ENCODE measurements at regions of chr5 and their contacts with region 1.

Region 1: DNA sequence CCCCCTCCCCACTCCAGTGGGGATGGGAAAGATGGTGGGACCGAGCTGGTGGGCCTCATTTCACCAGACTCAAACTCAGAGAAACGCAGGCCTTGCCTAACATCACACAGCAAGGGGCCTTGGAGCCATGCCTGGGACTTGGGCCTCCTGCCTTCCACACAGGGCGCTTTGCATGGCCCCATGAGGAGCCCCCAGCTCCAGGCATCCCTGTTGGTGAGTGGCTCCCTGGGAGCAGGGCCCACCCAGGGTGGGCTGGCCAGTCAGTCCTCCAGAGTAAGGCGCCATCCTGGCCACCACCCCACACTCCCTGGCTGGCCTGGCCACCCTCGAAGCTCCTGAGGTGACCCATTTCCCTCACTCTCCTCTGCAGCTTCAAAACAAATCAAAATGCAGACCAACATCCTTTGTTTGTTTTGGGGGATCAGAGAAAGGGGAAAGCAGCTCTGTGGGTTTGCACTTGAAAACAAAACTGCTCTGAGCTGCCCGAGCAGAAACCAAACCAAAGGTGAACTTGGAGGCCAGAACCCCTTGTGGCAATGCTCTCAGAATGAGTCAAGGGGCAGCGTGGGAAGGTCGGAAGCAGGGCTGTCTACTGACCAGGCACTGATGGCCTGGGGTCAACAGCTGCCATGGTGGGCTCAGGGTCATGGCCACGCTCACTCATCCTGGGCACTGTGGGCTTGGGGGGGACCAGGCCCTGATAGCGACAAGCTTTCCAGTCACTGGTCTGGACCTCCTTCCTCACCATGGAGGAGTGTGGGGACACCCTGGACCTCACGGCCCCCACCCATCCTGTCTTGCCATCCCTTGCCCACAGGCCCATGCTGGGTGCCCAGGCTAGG is 37.0 kb upstream of the VDAC1 start:
- DNase-seq: peak in 1 of 5 donors; percentile 13
- H3K4me3 ChIP-seq: no peak overlapping the region
- H3K4me3 Mint-ChIP-seq: peak overlapping the region in 4 of 7 donors; percentile 41 to 64 (median 49)
- H3K27ac ChIP-seq: no peak overlapping the region
- H3K27ac Mint-ChIP-seq: peak overlapping the region in 7 of 8 donors; percentile 17 to 89 (median 72)
- H3K4me1 ChIP-seq: peaks cover 36% of the 10 kb centered on the region
- H3K4me1 Mint-ChIP-seq: peaks cover 19 to 56% (median 37%) of the 10 kb centered on the region in 3 donors
- H3K27me3 ChIP-seq: no peaks in the 10 kb centered on the region
- H3K27me3 Mint-ChIP-seq: no peaks in the 10 kb centered on the region

Region 2: DNA sequence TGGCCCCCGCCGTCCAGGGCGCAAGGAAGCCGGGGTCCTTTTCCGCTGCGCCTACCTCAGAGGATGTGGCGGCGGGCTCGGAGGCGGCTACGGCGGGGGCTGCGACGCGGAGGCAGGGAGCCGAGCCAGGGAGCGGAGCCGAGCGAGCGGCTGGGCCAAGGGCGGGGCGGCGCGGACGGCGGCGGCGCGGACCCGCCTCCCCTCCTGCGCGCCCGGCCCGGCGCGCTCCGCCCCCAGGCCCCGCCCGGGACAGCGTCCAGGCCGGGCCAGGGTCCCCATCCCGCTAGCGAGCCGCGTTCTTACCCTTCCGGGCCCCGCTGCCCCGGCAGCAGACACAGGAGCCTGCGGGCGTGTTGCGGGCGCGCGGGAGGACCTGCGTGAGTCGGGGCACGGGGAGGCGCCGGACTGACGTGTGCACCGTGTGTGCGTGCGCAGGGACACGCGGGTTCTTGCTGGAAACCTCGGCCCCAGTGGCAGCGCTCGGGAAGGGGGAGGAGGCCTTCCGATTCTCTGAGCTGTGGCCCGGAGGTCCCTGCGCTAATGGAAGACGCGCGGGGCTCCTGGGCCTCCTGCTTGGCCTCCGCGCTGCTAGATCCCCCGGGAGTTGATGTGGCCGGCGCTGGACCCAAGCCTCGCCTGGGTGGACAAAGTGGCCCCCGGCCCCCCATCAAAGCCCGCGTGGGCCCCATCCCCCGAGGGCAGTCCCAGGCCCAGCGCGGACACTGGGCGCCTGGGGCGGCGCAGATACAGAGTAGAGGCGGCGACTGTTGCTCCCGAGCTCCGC is 37.0 kb before region 1 on chr5 and contains the start of gene VDAC1:
- CTCF ChIA-PET with region 1: interaction called, 12 read pairs
- POLR2A ChIA-PET with region 1: interaction called, 3 read pairs
- DNase-seq: peak; percentile 81 to 93 (median 90)
- H3K4me3 ChIP-seq: peak within 1 kb of the TSS; percentile 66
- H3K4me3 Mint-ChIP-seq: peak within 1 kb of the TSS; percentile 89 to 98 (median 94)
- H3K27ac ChIP-seq: peak within 1 kb of the TSS; percentile 94
- H3K27ac Mint-ChIP-seq: peak within 1 kb of the TSS; percentile 94 to 99 (median 98)
- H3K4me1 ChIP-seq: peaks cover 39% of the 10 kb centered on the region
- H3K4me1 Mint-ChIP-seq: peaks cover 35 to 51% (median 48%) of the 10 kb centered on the region in 3 donors
- H3K27me3 ChIP-seq: no peaks in the 10 kb centered on the region
- H3K27me3 Mint-ChIP-seq: no peaks in the 10 kb centered on the region
- total RNA-seq, gene VDAC1: 409 to 422 TPM

Region 3: DNA sequence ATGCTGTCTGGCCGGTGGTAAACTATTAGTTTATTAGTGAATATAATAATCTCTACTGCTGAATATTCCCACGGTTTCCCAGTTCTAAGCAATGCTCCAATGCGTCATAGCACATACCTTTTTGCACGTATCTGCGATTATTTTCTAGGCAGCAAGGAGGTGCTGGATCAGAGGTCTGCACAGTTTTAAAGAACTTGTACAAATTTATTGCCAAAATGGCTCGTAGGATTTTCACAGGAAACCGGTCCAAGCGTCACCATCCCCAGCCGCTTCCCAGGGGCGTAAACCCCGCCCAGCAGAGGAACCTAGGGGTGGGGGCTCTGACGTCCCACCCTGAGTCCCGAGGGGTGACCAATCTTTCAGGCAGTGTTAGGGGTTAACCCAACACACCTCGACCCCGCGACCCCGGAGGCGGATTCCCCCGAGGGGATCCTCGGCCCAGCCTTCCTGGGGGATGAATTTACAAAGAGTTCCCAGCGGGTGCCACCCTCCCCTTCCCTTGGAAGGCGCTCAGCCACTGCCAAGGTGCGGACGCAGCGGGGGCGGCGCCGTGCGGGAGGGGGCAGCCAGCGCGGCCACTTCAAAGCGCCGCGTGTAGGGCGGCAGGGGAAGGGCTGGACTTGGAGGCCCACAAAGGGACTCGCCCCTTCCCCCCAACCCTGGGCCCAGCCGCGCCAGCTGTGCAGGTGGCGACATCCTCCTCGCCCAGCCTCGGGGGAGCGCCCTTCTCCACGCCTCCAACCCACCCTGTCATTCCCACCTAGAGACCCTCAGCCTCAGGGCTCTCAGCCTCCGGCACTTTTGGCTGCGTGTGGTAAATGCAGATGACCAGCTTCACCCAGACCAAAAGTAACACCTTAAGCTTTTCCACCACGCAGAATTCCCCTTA is 29.2 kb after region 1 on chr5:
- CTCF ChIA-PET with region 1: interaction called, 45 read pairs
- POLR2A ChIA-PET with region 1: interaction called, 5 read pairs
- DNase-seq: peak in 3 of 5 donors; percentile 8 to 57 (median 19)
- H3K4me3 ChIP-seq: peak overlapping the region; percentile 55
- H3K4me3 Mint-ChIP-seq: peak overlapping the region; percentile 68 to 87 (median 82)
- H3K27ac ChIP-seq: no peak overlapping the region
- H3K27ac Mint-ChIP-seq: peak overlapping the region in 5 of 8 donors; percentile 6 to 86 (median 71)
- H3K4me1 ChIP-seq: peaks cover 58% of the 10 kb centered on the region
- H3K4me1 Mint-ChIP-seq: peaks cover 34 to 66% (median 55%) of the 10 kb centered on the region in 3 donors
- H3K27me3 ChIP-seq: no peaks in the 10 kb centered on the region
- H3K27me3 Mint-ChIP-seq: peaks cover 0 to 9% of the 10 kb centered on the region in 2 donors

Region 4: DNA sequence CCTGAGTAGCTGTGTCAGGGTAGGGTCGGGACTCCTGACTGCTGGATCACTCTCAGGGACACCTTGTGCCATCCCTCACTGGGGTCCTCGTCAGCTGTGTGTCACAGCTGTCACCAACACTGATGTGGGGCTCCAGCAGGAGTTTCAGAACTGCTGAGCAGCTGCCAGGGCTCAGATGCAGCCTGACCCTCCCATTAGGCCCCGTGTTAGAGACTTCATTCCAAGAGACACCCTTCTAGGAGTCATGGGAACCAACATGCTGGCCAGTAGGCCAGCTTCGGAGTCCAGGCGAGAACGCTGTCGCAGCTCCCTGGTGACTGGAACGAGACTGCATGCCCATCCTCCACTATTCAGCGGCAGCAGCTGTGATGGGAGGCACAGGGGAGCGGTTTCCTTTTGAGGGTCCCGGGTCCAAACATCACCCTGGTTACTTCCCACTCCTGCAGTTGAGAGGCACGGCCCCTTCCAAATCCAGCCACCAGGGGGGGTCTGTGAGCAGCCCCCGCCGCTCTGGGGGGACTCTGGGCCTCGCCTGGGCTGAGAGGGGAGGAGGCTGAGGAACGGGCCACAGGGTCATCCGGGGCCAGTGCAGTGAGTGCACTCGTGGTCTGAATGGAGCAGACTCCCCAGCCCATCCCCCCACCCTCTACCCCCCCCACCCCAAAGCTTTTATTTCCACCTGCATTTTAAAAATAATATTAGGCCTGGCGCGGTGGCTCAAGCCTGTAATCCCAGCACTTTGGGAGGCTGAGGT is 60.1 kb after region 1 on chr5:
- CTCF ChIA-PET with region 1: no interaction called
- POLR2A ChIA-PET with region 1: interaction called, 12 read pairs
- DNase-seq: peak; percentile 64 to 86 (median 74)
- H3K4me3 ChIP-seq: peak overlapping the region; percentile 34
- H3K4me3 Mint-ChIP-seq: peak overlapping the region in 4 of 7 donors; percentile 12 to 61 (median 25)
- H3K27ac ChIP-seq: no peak overlapping the region
- H3K27ac Mint-ChIP-seq: peak overlapping the region; percentile 15 to 95 (median 71)
- H3K4me1 ChIP-seq: peaks cover 91% of the 10 kb centered on the region
- H3K4me1 Mint-ChIP-seq: peaks cover 76 to 92% (median 91%) of the 10 kb centered on the region in 3 donors
- H3K27me3 ChIP-seq: no peaks in the 10 kb centered on the region
- H3K27me3 Mint-ChIP-seq: no peaks in the 10 kb centered on the region

Region 5: GRCh38 chr5:134132372-134133034 is 90.7 kb after region 1 on chr5:
- CTCF ChIA-PET with region 1: interaction called, 429 read pairs
- POLR2A ChIA-PET with region 1: interaction called, 7 read pairs
- DNase-seq: peak; percentile 78 to 95 (median 93)
- H3K4me3 ChIP-seq: peak overlapping the region; percentile 72
- H3K4me3 Mint-ChIP-seq: peak overlapping the region; percentile 72 to 99 (median 94)
- H3K27ac ChIP-seq: peak overlapping the region; percentile 78
- H3K27ac Mint-ChIP-seq: peak overlapping the region; percentile 92 to 100 (median 98)
- H3K4me1 ChIP-seq: peaks cover 100% of the 10 kb centered on the region
- H3K4me1 Mint-ChIP-seq: peaks cover 92 to 99% (median 99%) of the 10 kb centered on the region in 3 donors
- H3K27me3 ChIP-seq: no peaks in the 10 kb centered on the region
- H3K27me3 Mint-ChIP-seq: no peaks in the 10 kb centered on the region

Region 6: DNA sequence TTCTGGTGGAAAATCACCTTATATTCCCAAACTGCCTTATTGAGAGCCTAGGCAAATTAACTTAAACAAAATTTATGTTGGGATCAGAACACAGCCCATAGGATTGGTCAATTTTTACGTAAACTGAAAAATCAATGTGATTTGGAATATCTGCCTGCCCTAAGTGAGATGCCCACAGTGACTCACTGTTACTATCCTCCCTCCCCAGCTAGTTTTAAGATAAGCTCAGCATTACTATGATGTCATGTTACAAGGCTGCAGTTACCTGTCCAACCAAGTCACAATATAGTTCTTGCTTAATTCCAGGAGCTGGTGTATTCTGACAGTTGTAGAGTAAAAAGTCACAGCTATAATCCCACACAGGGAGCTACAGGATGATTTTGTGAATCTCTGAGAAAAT is 111.9 kb after region 1 on chr5:
- CTCF ChIA-PET with region 1: interaction called, 429 read pairs
- POLR2A ChIA-PET with region 1: interaction called, 10 read pairs
- DNase-seq: no peak
- H3K4me3 ChIP-seq: no peak overlapping the region
- H3K4me3 Mint-ChIP-seq: no peak overlapping the region
- H3K27ac ChIP-seq: no peak overlapping the region
- H3K27ac Mint-ChIP-seq: peak overlapping the region in 5 of 8 donors; percentile 25 to 91 (median 51)
- H3K4me1 ChIP-seq: peaks cover 52% of the 10 kb centered on the region
- H3K4me1 Mint-ChIP-seq: peaks cover 56 to 85% (median 80%) of the 10 kb centered on the region in 3 donors
- H3K27me3 ChIP-seq: no peaks in the 10 kb centered on the region
- H3K27me3 Mint-ChIP-seq: no peaks in the 10 kb centered on the region

Region 7: GRCh38 chr5:134245101-134245604 is 203.4 kb after region 1 on chr5:
- CTCF ChIA-PET with region 1: no interaction called
- POLR2A ChIA-PET with region 1: no interaction called
- DNase-seq: no peak
- H3K4me3 ChIP-seq: no peak overlapping the region
- H3K4me3 Mint-ChIP-seq: no peak overlapping the region
- H3K27ac ChIP-seq: no peak overlapping the region
- H3K27ac Mint-ChIP-seq: peak overlapping the region in 2 of 8 donors; percentile 54 to 77
- H3K4me1 ChIP-seq: no peaks in the 10 kb centered on the region
- H3K4me1 Mint-ChIP-seq: no peaks in the 10 kb centered on the region
- H3K27me3 ChIP-seq: no peaks in the 10 kb centered on the region
- H3K27me3 Mint-ChIP-seq: peaks cover 3 to 13% of the 10 kb centered on the region in 2 donors

Measured in CD8-positive, alpha-beta memory T cell (primary cell).